Ovary (tissue), 10 donors: ENCODE measurements at regions of chr6 and their contacts with region 1.

Region 1: DNA sequence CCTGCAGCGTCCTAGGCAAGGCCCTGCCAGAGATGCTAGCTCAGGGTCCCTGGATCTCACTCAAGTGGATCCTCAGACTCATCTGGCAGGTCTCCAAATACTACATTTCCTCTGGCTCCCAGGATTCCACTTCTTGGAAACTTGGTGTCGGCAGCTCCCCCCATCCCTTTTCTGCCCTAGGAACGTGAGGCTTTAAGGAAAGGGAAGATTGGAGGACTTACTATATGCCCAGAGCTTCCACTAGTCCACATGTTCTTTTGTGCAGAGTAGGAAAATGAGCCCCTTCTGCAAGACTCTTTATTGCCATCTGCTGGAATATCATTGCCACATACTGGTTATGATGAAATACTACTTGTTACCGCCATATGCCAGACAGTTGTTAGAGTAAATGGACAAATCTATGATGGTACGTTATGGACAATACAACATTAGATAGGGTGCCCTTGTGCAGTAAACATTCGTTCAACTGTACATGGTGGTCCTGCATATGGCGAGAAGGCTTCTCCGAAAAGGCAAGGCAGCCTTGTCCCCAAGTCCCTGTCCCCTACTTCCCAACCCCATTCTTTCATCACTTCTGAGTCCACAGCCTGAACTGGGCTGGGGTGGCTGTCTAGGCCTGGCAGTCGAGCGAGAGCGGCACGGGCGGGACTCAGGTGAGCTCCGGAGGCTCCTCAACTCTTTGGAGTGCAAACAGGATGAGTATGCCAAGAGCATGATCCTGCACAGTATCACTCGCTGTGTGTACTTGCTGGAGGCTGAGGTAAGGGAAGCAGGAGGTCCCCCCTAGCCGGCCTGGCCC is 780 bp downstream of the ARMC12 start:
- DNase-seq: peak in 1 of 5 donors; percentile 41
- H3K4me3 ChIP-seq: no peak overlapping the region
- H3K27ac ChIP-seq: no peak overlapping the region
- H3K4me1 ChIP-seq: peaks cover 4% of the 10 kb centered on the region
- H3K27me3 ChIP-seq: no peaks in the 10 kb centered on the region
- CTCF ChIP-seq: peak; percentile 83 to 97 (median 97)
- EP300 ChIP-seq: no peak
- POLR2A ChIP-seq: no peak

Region 2: GRCh38 chr6:36094753-36095496 is 357.3 kb after region 1 on chr6:
- intact Hi-C with region 1: loop called in 1 of 4 experiments (anchors 10 kb)
- DNase-seq: peak; percentile 70 to 89 (median 84)
- H3K4me3 ChIP-seq: no peak overlapping the region
- H3K27ac ChIP-seq: no peak overlapping the region
- H3K4me1 ChIP-seq: no peaks in the 10 kb centered on the region
- H3K27me3 ChIP-seq: no peaks in the 10 kb centered on the region
- CTCF ChIP-seq: peak; percentile 83 to 95 (median 84)
- EP300 ChIP-seq: no peak
- POLR2A ChIP-seq: peak; percentile 17